ENCODE measurements at regions of chr10 and their contacts with region 1.

Region 1: GRCh38 chr10:99620713-99621453 is 644 bp upstream of the SLC25A28 start:
- DNase-seq: peak; percentile 94
- H3K4me3 ChIP-seq: peak overlapping the region; percentile 24 to 57 (median 44)
- H3K27ac ChIP-seq: peak overlapping the region; percentile 93
- H3K4me1 ChIP-seq: peaks cover 21% of the 10 kb centered on the region
- H3K27me3 ChIP-seq: no peaks in the 10 kb centered on the region
- CTCF ChIP-seq: no peak
- POLR2A ChIP-seq: no peak

Region 2: GRCh38 chr10:99224766-99225165 is 396.1 kb before region 1 on chr10:
- CTCF ChIA-PET with region 1: no interaction called
- POLR2A ChIA-PET with region 1: no interaction called
- dilution Hi-C with region 1: no loop called
- intact Hi-C with region 1: no loop called
- DNase-seq: no peak
- H3K4me3 ChIP-seq: no peak overlapping the region
- H3K27ac ChIP-seq: no peak overlapping the region
- H3K4me1 ChIP-seq: no peaks in the 10 kb centered on the region
- H3K27me3 ChIP-seq: peaks cover 1 to 3% of the 10 kb centered on the region in 2 experiments
- CTCF ChIP-seq: no peak
- POLR2A ChIP-seq: no peak

Region 3: DNA sequence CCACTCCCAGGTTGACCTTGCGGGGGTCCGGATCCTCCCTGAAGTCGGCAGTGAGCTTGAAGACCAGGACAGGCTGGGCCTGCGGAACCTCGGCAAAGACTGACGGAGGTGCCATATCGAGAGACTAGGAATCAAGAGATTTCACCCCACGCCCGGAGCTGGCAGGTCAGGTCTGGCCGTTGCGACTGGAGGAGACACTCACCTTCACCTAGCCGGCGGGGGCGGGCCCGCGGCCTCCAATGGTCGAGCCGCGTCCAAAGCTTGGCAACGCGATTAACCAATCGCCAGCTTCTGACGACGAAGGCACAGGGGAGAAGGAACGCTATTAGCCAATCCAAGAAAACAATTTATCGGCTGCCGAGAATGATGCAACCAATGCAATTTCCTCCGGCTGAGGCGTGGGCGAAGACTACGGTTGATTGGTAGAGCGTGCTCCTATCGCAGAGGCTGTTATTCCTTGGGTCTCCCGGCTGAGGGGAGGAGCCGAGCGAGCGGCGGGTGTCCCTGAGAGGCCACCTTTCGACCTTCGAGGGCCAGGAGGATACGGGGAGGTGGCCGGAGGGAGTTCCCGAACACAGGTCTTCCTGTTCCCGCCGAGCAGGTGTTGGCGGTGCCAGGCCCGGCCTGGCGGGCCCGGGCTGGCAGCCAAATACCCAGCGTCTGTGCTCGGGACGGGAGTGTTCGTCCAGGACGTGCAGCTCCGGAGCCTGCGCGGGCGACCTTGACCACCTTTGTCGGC is 190.3 kb before region 1 on chr10 and contains the start of gene GOT1:
- CTCF ChIA-PET with region 1: interaction called, 233 read pairs
- POLR2A ChIA-PET with region 1: no interaction called
- dilution Hi-C with region 1: loop called (anchors 25 kb)
- intact Hi-C with region 1: no loop called
- DNase-seq: peak; percentile 99
- H3K4me3 ChIP-seq: peak within 1 kb of the TSS; percentile 53 to 87 (median 74)
- H3K27ac ChIP-seq: peak within 1 kb of the TSS; percentile 42
- H3K4me1 ChIP-seq: peaks cover 14% of the 10 kb centered on the region
- H3K27me3 ChIP-seq: no peaks in the 10 kb centered on the region
- CTCF ChIP-seq: no peak
- POLR2A ChIP-seq: peak; percentile 68
- total RNA-seq, gene GOT1: 36.3 and 40.7 TPM in 2 replicates

Region 4: GRCh38 chr10:99659031-99659867 is 38.4 kb after region 1 on chr10 and contains the start of gene ENTPD7:
- CTCF ChIA-PET with region 1: interaction called, 9 read pairs
- POLR2A ChIA-PET with region 1: interaction called, 9 read pairs
- dilution Hi-C with region 1: no loop called
- intact Hi-C with region 1: loop called (anchors 1 kb)
- DNase-seq: peak; percentile 97
- H3K4me3 ChIP-seq: peak within 1 kb of the TSS; percentile 54 to 80 (median 71)
- H3K27ac ChIP-seq: peak within 1 kb of the TSS; percentile 72
- H3K4me1 ChIP-seq: peaks cover 16% of the 10 kb centered on the region
- H3K27me3 ChIP-seq: peaks cover 4 to 6% of the 10 kb centered on the region in 2 experiments
- CTCF ChIP-seq: peak in 1 of 2 donors; percentile 24
- POLR2A ChIP-seq: no peak
- total RNA-seq, gene ENTPD7: 18.5 and 20.6 TPM in 2 replicates

Region 5: DNA sequence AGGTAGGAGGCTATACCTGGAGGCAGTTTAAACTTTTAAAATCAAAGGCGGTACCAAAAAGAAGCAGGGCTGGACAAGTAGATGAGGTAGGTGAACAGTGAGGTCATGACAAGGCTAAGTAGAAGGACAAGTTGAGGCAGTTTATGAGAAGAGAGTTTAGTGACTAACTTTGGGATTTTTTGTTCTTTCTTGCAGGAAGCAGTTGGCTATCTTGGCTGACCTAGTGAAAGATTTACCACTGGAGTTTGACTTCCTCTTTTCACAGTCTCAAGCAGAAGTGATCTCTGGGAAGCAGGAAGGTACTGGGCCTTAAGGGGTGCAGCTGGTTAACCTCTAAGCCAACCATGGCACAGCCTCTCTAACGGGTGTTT is 64.7 kb after region 1 on chr10:
- CTCF ChIA-PET with region 1: no interaction called
- POLR2A ChIA-PET with region 1: no interaction called
- dilution Hi-C with region 1: no loop called
- intact Hi-C with region 1: no loop called
- DNase-seq: peak; percentile 33
- H3K4me3 ChIP-seq: no peak overlapping the region
- H3K27ac ChIP-seq: no peak overlapping the region
- H3K4me1 ChIP-seq: no peaks in the 10 kb centered on the region
- H3K27me3 ChIP-seq: no peaks in the 10 kb centered on the region
- CTCF ChIP-seq: no peak
- POLR2A ChIP-seq: no peak

Region 6: GRCh38 chr10:99711129-99711719 is 90.3 kb after region 1 on chr10:
- CTCF ChIA-PET with region 1: no interaction called
- POLR2A ChIA-PET with region 1: no interaction called
- dilution Hi-C with region 1: no loop called
- intact Hi-C with region 1: loop called (anchors 2 kb)
- DNase-seq: peak; percentile 67
- H3K4me3 ChIP-seq: no peak overlapping the region
- H3K27ac ChIP-seq: no peak overlapping the region
- H3K4me1 ChIP-seq: no peaks in the 10 kb centered on the region
- H3K27me3 ChIP-seq: no peaks in the 10 kb centered on the region
- CTCF ChIP-seq: peak; percentile 36 to 46
- POLR2A ChIP-seq: no peak

Region 7: GRCh38 chr10:99779335-99779734 is 158.5 kb after region 1 on chr10:
- CTCF ChIA-PET with region 1: no interaction called
- POLR2A ChIA-PET with region 1: no interaction called
- dilution Hi-C with region 1: no loop called
- intact Hi-C with region 1: loop called (anchors 1 kb)
- DNase-seq: peak; percentile 95
- H3K4me3 ChIP-seq: peak overlapping the region; percentile 0 to 75 (median 42)
- H3K27ac ChIP-seq: peak overlapping the region; percentile 100
- H3K4me1 ChIP-seq: peaks cover 79% of the 10 kb centered on the region
- H3K27me3 ChIP-seq: no peaks in the 10 kb centered on the region
- CTCF ChIP-seq: no peak
- POLR2A ChIP-seq: peak; percentile 41

Measured in endothelial cell of umbilical vein (primary cell).